GM13977 (cell line): ENCODE measurements at regions of chr22 and their contacts with region 1.

Region 1: GRCh38 chr22:22207845-22208564 is 36.6 kb upstream of the VPREB1 start:
- DNase-seq: peak; percentile 92
- CTCF ChIP-seq: peak; percentile 93

Region 2: GRCh38 chr22:22928666-22929380 is 720.8 kb after region 1 on chr22:
- in situ Hi-C with region 1: loop called (anchors 10 kb)
- DNase-seq: peak; percentile 89
- CTCF ChIP-seq: no peak